OCI-LY7 (cell line): ENCODE measurements at regions of chr1 and their contacts with region 1.

Region 1: DNA sequence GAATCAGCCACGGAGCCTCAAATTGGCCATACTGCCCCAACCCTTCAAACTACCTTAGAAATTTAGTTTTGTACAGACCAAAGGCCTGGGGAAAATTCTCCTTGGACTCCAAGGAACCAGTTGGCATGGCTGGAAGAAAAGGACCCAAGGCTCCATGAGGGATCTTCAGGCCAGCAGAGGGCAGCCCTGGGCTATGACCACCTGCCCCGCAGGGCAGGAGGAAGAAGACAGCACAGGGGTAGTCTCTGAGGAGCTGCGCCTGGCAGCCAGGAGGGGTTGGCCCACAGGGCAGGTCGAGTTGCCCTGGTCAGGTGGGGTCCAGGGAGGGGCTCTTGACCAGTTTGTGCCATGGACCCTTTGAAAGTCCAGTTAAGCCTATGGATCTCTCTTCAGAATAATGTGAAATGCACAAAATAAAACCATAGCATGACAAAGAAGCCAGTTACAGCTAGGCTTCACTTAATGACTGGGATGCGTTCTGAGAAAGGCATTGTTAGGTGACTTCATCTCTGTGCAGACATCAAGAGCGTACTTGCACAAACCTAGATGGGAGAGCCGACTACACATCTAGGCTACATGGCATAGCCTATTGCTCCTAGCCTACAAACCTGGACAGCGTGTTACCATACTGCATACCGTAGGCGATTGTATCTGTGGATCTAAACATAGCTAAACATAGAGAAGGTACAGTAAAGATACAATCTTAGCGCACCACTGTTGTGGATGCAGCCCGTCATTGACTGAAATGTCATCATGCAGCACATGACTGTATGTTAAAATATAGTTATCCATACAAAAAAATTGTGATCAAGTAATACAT is 26.1 kb downstream of the CACNA1S start:
- DNase-seq: peak; percentile 33
- H3K4me3 ChIP-seq: no peak overlapping the region
- H3K27ac ChIP-seq: no peak overlapping the region
- H3K4me1 ChIP-seq: no peaks in the 10 kb centered on the region
- CTCF ChIP-seq: peak; percentile 67

Region 2: GRCh38 chr1:201114236-201115131 is 28.4 kb after region 1 on chr1:
- CTCF ChIA-PET with region 1: interaction called, 3 read pairs
- POLR2A ChIA-PET with region 1: no interaction called
- intact Hi-C with region 1: loop called (anchors 1 kb)
- DNase-seq: peak; percentile 55
- H3K4me3 ChIP-seq: no peak overlapping the region
- H3K27ac ChIP-seq: no peak overlapping the region
- H3K4me1 ChIP-seq: peaks cover 5% of the 10 kb centered on the region
- CTCF ChIP-seq: peak; percentile 73

Region 3: GRCh38 chr1:201229771-201230635 is 143.9 kb after region 1 on chr1:
- CTCF ChIA-PET with region 1: no interaction called
- POLR2A ChIA-PET with region 1: no interaction called
- intact Hi-C with region 1: loop called (anchors 10 kb)
- DNase-seq: no peak
- H3K4me3 ChIP-seq: no peak overlapping the region
- H3K27ac ChIP-seq: no peak overlapping the region
- H3K4me1 ChIP-seq: no peaks in the 10 kb centered on the region
- CTCF ChIP-seq: no peak